ENCODE measurements at regions of chr7 and their contacts with region 1.

Region 1: DNA sequence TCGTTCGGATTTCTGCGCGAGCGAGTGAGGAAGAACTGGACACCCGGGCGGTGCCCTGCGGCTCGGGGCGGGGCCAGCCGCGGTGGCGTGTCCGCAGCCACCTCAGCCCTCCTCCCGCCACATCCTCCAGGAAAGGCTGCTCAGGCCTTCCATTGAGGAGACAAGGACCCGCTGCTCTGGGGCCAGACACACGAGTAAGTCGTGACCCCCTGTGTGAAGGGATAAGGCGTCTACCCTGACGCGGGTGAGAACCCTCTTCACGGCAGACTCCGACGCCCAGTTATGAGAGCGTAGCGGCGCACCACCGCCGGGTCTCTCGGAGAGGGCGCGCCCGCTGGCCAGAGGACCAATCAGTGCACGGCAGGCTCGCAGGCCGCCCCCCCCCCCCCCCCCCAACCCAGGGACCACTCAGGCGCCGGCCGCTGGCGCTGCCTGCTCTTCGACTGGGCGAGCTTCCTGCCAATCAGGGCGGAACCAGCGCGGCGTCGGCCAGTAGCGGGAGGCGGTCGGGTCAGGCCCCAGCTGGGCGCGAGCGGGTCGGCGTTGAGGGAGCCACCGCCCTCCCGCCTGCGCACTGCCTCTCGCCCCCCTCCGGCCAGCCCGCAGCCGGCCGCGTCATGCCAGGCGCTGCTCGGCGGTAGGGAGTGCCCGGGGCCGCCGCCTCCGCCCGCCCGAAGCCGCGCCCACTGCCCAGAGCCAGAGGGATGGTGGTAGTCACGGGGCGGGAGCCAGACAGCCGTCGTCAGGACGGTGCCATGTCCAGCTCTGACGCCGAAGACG is at the start of gene KCTD7:
- DNase-seq: peak; percentile 98
- H3K4me3 ChIP-seq: peak within 1 kb of the TSS; percentile 74
- H3K27ac ChIP-seq: peak within 1 kb of the TSS; percentile 66
- H3K4me1 ChIP-seq: peaks cover 58% of the 10 kb centered on the region
- CTCF ChIP-seq: no peak
- total RNA-seq, gene KCTD7: 32.9 and 40.5 TPM in 2 replicates

Region 2: GRCh38 chr7:66591799-66592596 is 36.6 kb before region 1 on chr7:
- CTCF ChIA-PET with region 1: no interaction called
- POLR2A ChIA-PET with region 1: interaction called, 4 read pairs
- intact Hi-C with region 1: loop called (anchors 2 kb)
- DNase-seq: peak; percentile 94
- H3K4me3 ChIP-seq: peak overlapping the region; percentile 95
- H3K27ac ChIP-seq: peak overlapping the region; percentile 58
- H3K4me1 ChIP-seq: peaks cover 34% of the 10 kb centered on the region
- CTCF ChIP-seq: no peak

Region 3: GRCh38 chr7:66642186-66642585 is 13.6 kb after region 1 on chr7:
- CTCF ChIA-PET with region 1: interaction called, 4 read pairs
- POLR2A ChIA-PET with region 1: interaction called, 20 read pairs
- intact Hi-C with region 1: no loop called
- DNase-seq: peak; percentile 24
- H3K4me3 ChIP-seq: no peak overlapping the region
- H3K27ac ChIP-seq: peak overlapping the region; percentile 19
- H3K4me1 ChIP-seq: peaks cover 25% of the 10 kb centered on the region
- CTCF ChIP-seq: no peak

Region 4: DNA sequence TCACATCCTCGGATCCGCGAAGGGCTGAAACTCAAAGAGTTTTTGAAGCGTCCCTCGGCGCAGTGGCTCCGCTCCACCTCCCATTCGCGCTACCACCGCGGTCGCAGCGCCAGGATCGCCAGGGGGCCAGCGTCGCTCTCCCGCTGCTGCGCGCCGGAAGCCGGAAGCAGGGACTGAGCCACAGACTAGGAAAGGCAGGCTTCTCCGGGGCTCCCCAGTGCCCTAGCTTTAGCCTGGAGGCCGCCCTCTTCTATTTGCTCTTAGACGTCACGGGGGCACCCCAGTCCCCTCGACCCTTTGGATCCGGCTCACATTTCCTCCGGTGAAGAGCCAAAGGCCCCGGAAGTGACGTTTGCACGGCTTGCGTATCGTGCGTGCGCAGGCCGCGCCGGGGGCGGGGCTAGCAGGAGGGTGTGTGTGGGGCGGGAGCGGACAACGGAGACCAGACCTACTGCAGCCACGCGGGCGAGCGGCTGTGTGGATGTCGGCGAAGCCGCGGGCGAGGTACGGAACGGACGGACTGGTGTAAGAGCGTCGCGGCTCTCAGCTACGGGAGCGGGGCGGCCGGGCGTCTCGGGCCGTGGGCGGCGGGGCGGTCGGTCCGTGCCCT is 25.7 kb after region 1 on chr7:
- CTCF ChIA-PET with region 1: no interaction called
- POLR2A ChIA-PET with region 1: interaction called, 7 read pairs
- intact Hi-C with region 1: loop called (anchors 1 kb)
- DNase-seq: peak; percentile 99
- H3K4me3 ChIP-seq: peak overlapping the region; percentile 71
- H3K27ac ChIP-seq: peak overlapping the region; percentile 80
- H3K4me1 ChIP-seq: peaks cover 7% of the 10 kb centered on the region
- CTCF ChIP-seq: 0 out of 2 replicates have a peak, but pooled peaks have one; percentile 40

Region 5: DNA sequence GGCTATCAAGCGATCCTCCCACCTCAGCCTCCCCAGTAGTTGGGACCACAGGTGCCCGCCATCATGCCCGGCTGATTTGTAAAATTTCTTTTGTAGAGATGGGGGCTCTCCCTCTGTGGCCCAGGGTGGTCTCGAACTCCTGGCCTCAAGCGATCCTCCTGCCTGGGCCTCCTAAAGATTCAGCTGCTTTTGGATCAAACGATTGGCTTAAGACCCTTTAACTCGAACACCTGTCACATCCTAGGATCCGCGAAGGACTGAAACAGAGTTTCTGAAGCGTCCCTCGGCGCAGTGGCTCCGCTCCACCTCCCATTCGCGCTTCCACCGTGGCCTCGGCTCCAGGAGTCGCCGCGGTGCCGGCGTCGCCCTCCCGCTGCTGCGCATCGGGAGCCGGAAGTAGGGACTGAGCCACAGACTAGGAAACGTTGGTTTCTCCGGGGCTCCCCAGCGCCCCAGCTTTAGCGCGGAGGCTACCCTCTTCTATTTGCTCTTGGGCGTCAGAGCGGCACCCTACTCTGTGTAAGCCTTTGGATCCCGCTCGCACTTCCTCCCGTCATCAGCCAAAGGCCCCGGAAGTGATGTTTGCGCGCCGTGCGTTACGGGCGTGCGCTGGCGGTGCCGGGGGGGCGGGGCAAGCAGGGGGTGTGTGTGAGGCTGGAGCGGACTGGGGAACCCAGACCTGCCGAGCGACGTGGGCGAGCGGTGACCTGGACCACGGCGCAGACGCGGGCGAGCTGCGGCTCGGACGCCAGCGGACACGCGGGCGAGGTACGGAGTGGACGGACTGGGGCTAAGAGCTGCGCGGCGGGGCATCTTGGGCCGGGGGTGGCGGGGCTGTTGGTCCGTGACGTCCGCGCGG is 53.2 kb after region 1 on chr7:
- CTCF ChIA-PET with region 1: no interaction called
- POLR2A ChIA-PET with region 1: no interaction called
- intact Hi-C with region 1: loop called (anchors 2 kb)
- DNase-seq: peak; percentile 95
- H3K4me3 ChIP-seq: peak overlapping the region; percentile 80
- H3K27ac ChIP-seq: peak overlapping the region; percentile 76
- H3K4me1 ChIP-seq: peaks cover 27% of the 10 kb centered on the region
- CTCF ChIP-seq: no peak

Region 6: GRCh38 chr7:66740302-66740979 is 111.9 kb after region 1 on chr7 and contains the start of gene RABGEF1:
- CTCF ChIA-PET with region 1: no interaction called
- POLR2A ChIA-PET with region 1: interaction called, 8 read pairs
- intact Hi-C with region 1: loop called (anchors 5 kb)
- DNase-seq: peak; percentile 97
- H3K4me3 ChIP-seq: peak within 1 kb of the TSS; percentile 77
- H3K27ac ChIP-seq: peak within 1 kb of the TSS; percentile 80
- H3K4me1 ChIP-seq: peaks cover 39% of the 10 kb centered on the region
- CTCF ChIP-seq: no peak
- total RNA-seq, gene RABGEF1: 18.2 and 21.0 TPM in 2 replicates

Measured in OCI-LY7 (cell line).